Ascending aorta (tissue), 2 donors: ENCODE measurements at regions of chr7 and their contacts with region 1.

Region 1: DNA sequence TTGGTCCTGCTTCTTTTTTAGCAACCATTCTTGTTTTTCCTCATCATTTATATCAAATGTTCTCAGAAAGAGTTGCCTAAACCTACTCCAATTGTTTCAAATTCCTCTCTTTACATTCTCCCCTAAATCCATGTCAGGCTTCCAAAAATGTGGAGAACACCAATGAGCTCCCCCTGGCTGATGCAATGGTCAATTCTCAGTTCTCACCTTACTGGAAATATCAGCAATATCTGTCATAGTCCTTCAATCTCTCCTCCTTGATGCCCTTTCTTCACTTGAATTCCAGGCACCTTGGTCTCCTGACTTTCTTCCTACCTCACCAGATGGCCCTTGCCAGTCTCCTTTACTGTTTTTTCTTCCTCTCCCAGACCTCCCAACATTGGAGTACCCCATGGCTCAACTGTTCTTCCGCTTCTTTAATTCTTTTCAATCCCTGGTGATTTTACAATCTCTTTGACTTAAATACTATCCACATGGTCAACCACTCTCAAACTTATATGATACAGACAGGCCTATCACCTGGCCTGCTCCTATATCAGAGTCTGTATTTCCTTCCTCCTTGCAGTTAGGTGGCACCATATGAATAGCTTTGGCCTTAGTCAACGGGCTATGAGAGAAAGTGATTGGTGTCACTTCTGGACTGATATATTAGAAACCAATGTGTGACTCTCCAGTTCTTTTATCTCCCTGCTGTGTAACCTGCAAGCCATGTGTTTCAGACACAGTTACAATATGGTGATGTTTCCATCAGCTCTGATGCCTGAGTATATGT is 47.4 kb upstream of the CAV2 start:
- DNase-seq: no peak
- H3K4me3 ChIP-seq: no peak overlapping the region
- H3K27ac ChIP-seq: no peak overlapping the region
- H3K4me1 ChIP-seq: peaks cover 0 to 21% of the 10 kb centered on the region in 2 donors
- H3K27me3 ChIP-seq: no peaks in the 10 kb centered on the region
- CTCF ChIP-seq: no peak

Region 2: DNA sequence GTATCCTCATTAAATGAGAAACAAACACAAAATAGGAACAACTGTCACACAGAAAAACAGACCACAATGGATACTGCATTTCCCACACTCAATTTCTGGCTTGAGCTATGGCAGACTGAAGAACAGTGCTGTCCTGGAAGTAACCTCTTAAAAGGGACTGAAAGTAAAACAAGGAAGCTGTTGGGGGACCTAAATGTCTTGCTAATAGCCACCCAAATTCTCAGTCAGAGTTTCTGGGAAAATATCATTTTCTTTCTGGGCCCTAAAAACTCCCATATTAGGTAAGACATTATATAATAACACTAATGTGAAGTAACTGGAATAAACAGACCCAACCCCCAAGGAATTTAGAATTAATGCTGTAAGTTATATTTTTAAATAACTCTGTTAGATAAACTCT is 340.7 kb before region 1 on chr7:
- intact Hi-C with region 1: no loop called
- DNase-seq: no peak
- H3K4me3 ChIP-seq: no peak overlapping the region
- H3K27ac ChIP-seq: no peak overlapping the region
- H3K4me1 ChIP-seq: no peaks in the 10 kb centered on the region
- H3K27me3 ChIP-seq: no peaks in the 10 kb centered on the region
- CTCF ChIP-seq: no peak

Region 3: DNA sequence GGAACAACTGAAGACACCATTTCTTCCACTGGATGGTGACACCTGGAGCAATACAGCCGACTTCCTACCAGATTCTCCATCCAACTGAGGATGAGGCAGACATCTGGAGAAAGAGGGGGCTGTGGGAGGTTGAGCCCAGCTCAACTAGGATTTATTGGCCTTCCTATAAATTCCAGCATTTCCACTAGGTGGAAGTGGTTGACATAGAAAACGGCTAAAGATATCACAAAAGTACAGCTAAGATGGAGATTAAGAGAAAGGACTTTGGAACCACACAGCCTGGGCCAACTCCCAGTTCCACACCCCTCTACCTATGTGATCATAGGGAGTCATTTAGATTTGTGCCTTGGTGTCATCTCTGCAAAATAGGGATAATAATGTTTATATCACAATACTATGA is 13.9 kb before region 1 on chr7:
- intact Hi-C with region 1: no loop called
- DNase-seq: no peak
- H3K4me3 ChIP-seq: no peak overlapping the region
- H3K27ac ChIP-seq: peak overlapping the region; percentile 76 to 82
- H3K4me1 ChIP-seq: peaks cover 6 to 41% of the 10 kb centered on the region in 2 donors
- H3K27me3 ChIP-seq: no peaks in the 10 kb centered on the region
- CTCF ChIP-seq: peak in 1 of 3 experiments; percentile 22

Region 4: GRCh38 chr7:116487907-116488521 is 35.9 kb after region 1 on chr7:
- intact Hi-C with region 1: loop called (anchors 5 kb)
- DNase-seq: no peak
- H3K4me3 ChIP-seq: no peak overlapping the region
- H3K27ac ChIP-seq: peak overlapping the region in 1 of 2 donors; percentile 13
- H3K4me1 ChIP-seq: peaks cover 0 to 26% of the 10 kb centered on the region in 2 donors
- H3K27me3 ChIP-seq: no peaks in the 10 kb centered on the region
- CTCF ChIP-seq: no peak

Region 5: DNA sequence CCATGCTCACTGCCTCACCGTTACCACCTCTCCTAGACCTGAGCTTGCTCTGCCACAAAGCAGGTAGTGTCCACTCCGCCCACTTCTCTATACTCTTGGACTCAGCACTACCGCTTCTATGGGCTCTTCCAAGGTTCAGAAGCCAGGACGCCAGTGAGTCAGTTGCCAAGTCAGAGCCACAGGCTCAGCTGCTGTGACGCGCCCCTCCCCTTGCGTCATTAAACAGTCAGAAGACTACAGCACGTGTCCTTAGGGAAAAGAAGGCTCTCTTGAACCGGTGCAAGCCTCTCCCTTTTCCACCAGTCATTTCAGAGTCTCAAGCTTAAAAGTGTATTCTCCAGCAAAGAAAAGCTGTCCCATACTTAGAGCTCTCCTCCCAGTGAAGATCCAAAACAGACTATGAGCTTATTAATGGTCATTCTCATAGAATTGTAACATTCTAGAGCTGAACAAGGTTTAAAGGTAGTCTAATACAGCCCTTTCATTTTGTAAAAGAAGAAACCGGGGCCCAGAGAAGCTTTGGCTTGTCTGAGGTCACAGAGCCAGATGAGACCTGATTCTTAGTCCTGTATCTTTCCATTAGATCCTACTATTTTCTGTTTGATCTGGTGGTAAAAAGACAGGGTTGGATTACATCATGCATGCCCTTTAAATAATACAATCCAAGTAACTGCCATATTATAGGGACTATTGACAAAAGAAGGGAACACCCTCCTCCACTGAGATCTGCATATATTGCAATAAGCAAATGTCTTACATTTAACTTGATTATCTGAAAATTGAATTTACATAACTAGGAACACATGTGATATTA is 179.0 kb after region 1 on chr7:
- intact Hi-C with region 1: no loop called
- DNase-seq: peak; percentile 33 to 80
- H3K4me3 ChIP-seq: no peak overlapping the region
- H3K27ac ChIP-seq: no peak overlapping the region
- H3K4me1 ChIP-seq: peaks cover 3 to 8% of the 10 kb centered on the region in 2 donors
- H3K27me3 ChIP-seq: no peaks in the 10 kb centered on the region
- CTCF ChIP-seq: no peak